Thyroid gland (tissue), 4 donors: ENCODE measurements at regions of chr22 and their contacts with region 1.

Region 1: GRCh38 chr22:38868886-38869381 is 3.1 kb downstream of the CBX6 start:
- DNase-seq: peak; percentile 81 to 87
- H3K4me3 ChIP-seq: no peak overlapping the region
- H3K27ac ChIP-seq: no peak overlapping the region
- H3K4me1 ChIP-seq: peaks cover 27 to 62% of the 10 kb centered on the region in 2 donors
- H3K27me3 ChIP-seq: no peaks in the 10 kb centered on the region
- CTCF ChIP-seq: peak; percentile 72 to 88 (median 78)
- POLR2A ChIP-seq: no peak

Region 2: GRCh38 chr22:38777087-38777671 is 91.8 kb before region 1 on chr22:
- intact Hi-C with region 1: loop called (anchors 10 kb)
- DNase-seq: no peak
- H3K4me3 ChIP-seq: no peak overlapping the region
- H3K27ac ChIP-seq: no peak overlapping the region
- H3K4me1 ChIP-seq: no peaks in the 10 kb centered on the region
- H3K27me3 ChIP-seq: no peaks in the 10 kb centered on the region
- CTCF ChIP-seq: no peak
- POLR2A ChIP-seq: no peak

Region 3: GRCh38 chr22:38927033-38927781 is 58.3 kb after region 1 on chr22:
- intact Hi-C with region 1: no loop called
- DNase-seq: peak; percentile 80 to 88
- H3K4me3 ChIP-seq: no peak overlapping the region
- H3K27ac ChIP-seq: peak overlapping the region; percentile 64 to 95 (median 85)
- H3K4me1 ChIP-seq: peaks cover 27 to 46% of the 10 kb centered on the region in 2 donors
- H3K27me3 ChIP-seq: no peaks in the 10 kb centered on the region
- CTCF ChIP-seq: peak in 5 of 6 experiments; percentile 26 to 73 (median 62)
- POLR2A ChIP-seq: peak in 1 of 2 donors; percentile 37

Region 4: GRCh38 chr22:39123751-39124601 is 255.0 kb after region 1 on chr22:
- intact Hi-C with region 1: loop called (anchors 5 kb)
- DNase-seq: no peak
- H3K4me3 ChIP-seq: no peak overlapping the region
- H3K27ac ChIP-seq: no peak overlapping the region
- H3K4me1 ChIP-seq: no peaks in the 10 kb centered on the region
- H3K27me3 ChIP-seq: no peaks in the 10 kb centered on the region
- CTCF ChIP-seq: no peak
- POLR2A ChIP-seq: no peak

Region 5: GRCh38 chr22:39306581-39307361 is 437.8 kb after region 1 on chr22:
- intact Hi-C with region 1: loop called (anchors 10 kb)
- DNase-seq: no peak
- H3K4me3 ChIP-seq: no peak overlapping the region
- H3K27ac ChIP-seq: no peak overlapping the region
- H3K4me1 ChIP-seq: no peaks in the 10 kb centered on the region
- H3K27me3 ChIP-seq: no peaks in the 10 kb centered on the region
- CTCF ChIP-seq: peak in 3 of 6 experiments; percentile 13 to 18 (median 13)
- POLR2A ChIP-seq: no peak